ENCODE measurements at regions of chr17 and their contacts with region 1.

Region 1: GRCh38 chr17:51120739-51121617 is at the start of gene SPAG9:
- DNase-seq: peak; percentile 97 to 99
- ATAC-seq: peak; percentile 79 to 85 (median 80)
- H3K4me3 ChIP-seq: peak within 1 kb of the TSS; percentile 99
- H3K27ac ChIP-seq: peak within 1 kb of the TSS; percentile 99
- H3K4me1 ChIP-seq: peaks cover 31% of the 10 kb centered on the region
- H3K27me3 ChIP-seq: no peaks in the 10 kb centered on the region
- CTCF ChIP-seq: no peak
- total RNA-seq, gene SPAG9: 82.1 to 133 (median 121) TPM

Region 2: GRCh38 chr17:51046514-51047384 is 74.2 kb before region 1 on chr17:
- intact Hi-C with region 1: no loop called
- DNase-seq: peak in 1 of 2 donors; percentile 38
- ATAC-seq: peak; percentile 32 to 79 (median 70)
- H3K4me3 ChIP-seq: peak overlapping the region; percentile 5
- H3K27ac ChIP-seq: no peak overlapping the region
- H3K4me1 ChIP-seq: peaks cover 7% of the 10 kb centered on the region
- H3K27me3 ChIP-seq: no peaks in the 10 kb centered on the region
- CTCF ChIP-seq: no peak

Region 3: DNA sequence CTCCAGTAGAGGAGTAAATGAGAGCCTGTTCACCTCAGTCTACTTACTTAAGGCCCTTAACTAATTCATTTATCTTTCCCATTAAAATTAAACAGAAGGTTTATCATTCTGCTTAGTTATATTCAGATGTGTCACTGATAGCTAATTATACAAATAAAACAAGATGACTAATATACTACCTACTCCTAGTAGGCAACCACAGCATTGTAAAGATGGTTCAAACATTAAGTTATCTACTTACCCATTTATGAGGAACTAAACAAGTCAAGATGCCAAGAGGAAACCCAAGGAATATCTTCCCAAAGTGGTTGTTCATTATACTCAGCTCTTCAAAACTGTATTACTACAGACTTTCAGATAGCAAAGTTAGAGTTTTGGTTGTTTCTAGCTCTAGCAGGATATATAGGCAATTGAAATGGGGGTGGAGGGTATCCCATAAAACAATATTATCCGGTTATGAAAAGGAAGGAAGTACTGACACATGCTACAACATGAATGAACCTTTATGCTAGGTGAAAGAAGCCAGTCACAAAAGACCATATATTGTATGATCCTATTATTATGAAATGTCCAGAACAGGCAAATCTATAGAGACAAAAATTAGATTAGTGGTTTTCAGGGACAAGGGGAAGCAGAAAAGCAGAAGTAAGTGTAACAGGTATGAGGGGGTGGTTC is 56.8 kb before region 1 on chr17:
- intact Hi-C with region 1: loop called in 1 of 2 experiments (anchors 10 kb)
- DNase-seq: no peak
- ATAC-seq: peak in 1 of 4 donors; percentile 37
- H3K4me3 ChIP-seq: no peak overlapping the region
- H3K27ac ChIP-seq: no peak overlapping the region
- H3K4me1 ChIP-seq: peaks cover under 1% of the 10 kb centered on the region
- H3K27me3 ChIP-seq: no peaks in the 10 kb centered on the region
- CTCF ChIP-seq: no peak

Region 4: DNA sequence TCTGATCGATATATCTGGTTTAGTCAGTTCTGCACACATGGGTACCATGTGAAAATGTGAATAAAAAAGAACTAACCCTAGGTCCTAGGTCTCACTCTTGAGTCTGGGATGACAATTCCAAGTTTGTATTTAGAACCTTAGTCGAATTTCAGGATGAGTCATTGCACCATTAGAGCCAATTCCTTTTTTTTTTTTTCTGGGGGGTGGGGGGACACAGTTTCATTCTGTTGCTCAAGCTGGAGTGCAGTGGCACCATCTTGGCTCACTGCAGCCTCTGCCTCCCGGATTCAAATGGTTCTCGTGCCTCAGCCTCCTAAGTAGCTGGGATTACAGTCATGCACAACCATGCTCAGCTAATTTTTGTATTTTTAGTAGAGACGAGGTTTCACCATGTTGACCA is 41.9 kb before region 1 on chr17:
- intact Hi-C with region 1: loop called (anchors 2 to 5 kb)
- DNase-seq: peak in 1 of 2 donors; percentile 58
- ATAC-seq: peak; percentile 62 to 85 (median 78)
- H3K4me3 ChIP-seq: peak overlapping the region; percentile 22
- H3K27ac ChIP-seq: peak overlapping the region; percentile 67
- H3K4me1 ChIP-seq: peaks cover 18% of the 10 kb centered on the region
- H3K27me3 ChIP-seq: no peaks in the 10 kb centered on the region
- CTCF ChIP-seq: no peak

Region 5: DNA sequence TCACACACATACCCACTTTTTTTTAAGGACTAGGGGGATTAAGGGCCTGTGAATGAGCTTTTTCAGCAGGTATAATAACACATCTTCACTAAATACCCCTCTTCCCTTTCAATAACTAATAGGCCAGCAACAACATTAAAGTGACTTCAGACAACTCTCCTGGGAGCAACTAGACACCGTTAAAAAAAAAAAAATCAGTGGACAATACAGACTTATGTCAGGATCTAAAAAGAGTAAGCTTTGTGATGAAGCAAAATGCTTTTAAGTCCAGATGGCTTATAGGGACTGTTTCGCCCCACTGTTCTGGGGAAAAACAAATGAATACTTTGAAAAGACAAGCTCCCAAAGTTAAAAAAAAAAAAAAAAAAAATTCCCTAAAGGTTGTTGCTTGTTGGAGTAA is 29.3 kb before region 1 on chr17:
- intact Hi-C with region 1: loop called in 1 of 2 experiments (anchors 2 kb)
- DNase-seq: no peak
- ATAC-seq: peak; percentile 64 to 87 (median 84)
- H3K4me3 ChIP-seq: no peak overlapping the region
- H3K27ac ChIP-seq: peak overlapping the region; percentile 68
- H3K4me1 ChIP-seq: peaks cover 35% of the 10 kb centered on the region
- H3K27me3 ChIP-seq: no peaks in the 10 kb centered on the region
- CTCF ChIP-seq: no peak

Region 6: DNA sequence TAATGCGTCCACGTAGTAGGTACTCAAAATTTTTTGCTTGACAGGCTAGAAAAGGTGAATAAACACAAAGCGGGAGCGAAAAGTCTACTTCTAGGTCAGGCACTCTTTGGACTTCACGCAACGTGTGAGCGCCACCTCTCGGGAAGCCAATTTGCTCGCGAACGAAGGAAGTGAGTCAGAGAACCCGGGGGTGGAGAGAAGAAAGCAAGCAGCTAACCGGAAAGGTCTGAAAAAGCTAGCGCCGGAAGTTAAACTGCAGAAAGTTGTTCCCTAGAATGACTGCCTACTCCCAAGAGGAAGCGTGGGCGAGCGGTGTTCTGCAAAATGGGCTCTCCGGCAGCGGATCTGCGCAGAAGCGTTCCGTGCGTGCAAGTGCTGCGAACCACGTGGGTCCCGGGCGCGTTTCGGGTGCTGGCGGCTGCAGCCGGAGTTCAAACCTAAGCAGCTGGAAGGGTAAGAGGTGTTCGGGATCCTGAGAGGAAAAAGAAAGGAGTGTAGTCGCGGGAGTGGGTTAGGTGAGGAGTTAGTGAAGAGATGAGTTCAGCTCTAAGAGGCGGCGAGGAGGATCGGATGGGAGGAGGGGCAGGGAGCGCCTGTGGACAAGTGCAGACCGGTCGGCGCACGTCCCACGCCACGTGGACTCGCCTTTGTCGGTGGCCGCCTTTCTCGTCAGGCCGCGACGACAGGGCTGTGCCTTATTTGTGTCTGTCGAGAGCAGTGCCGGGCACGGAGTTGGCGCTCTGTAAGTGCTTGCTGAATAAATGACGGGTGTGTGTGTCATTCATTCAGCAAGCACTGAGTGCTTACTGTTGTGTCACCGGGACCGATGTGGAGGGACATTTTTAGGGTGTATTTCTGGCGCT is 32.5 kb after region 1 on chr17 and contains the start of gene NME1:
- intact Hi-C with region 1: loop called (anchors 1 to 2 kb)
- DNase-seq: peak; percentile 92 to 97
- ATAC-seq: peak; percentile 93 to 95 (median 94)
- H3K4me3 ChIP-seq: peak within 1 kb of the TSS; percentile 88
- H3K27ac ChIP-seq: peak within 1 kb of the TSS; percentile 83
- H3K4me1 ChIP-seq: peaks cover 5% of the 10 kb centered on the region
- H3K27me3 ChIP-seq: no peaks in the 10 kb centered on the region
- CTCF ChIP-seq: peak; percentile 76
- total RNA-seq, gene NME1: 29.3 to 75.0 (median 50.9) TPM

Region 7: DNA sequence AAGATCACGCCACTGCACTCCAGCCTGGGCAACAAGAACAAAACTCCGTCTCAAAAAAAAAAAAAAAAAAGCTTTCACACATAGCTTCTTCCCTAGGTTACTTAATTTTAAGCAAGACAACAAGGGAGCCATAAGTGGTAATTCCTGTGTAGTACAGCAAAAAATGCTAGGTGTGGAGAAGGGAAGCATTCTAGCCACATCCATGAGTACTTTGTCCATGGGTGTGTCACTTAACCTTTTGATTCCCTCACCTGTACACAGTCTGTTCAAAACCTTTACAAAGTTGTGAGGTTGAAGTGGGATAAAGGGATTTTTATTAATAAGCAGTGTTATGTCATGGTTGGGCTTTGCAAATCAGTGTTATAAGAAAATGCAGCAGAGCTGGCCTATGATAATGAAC is 49.8 kb after region 1 on chr17:
- intact Hi-C with region 1: no loop called
- DNase-seq: no peak
- ATAC-seq: no peak
- H3K4me3 ChIP-seq: no peak overlapping the region
- H3K27ac ChIP-seq: no peak overlapping the region
- H3K4me1 ChIP-seq: peaks cover 10% of the 10 kb centered on the region
- H3K27me3 ChIP-seq: no peaks in the 10 kb centered on the region
- CTCF ChIP-seq: no peak

Region 8: GRCh38 chr17:51197765-51198164 is 76.8 kb after region 1 on chr17:
- intact Hi-C with region 1: no loop called
- DNase-seq: no peak
- ATAC-seq: no peak
- H3K4me3 ChIP-seq: no peak overlapping the region
- H3K27ac ChIP-seq: no peak overlapping the region
- H3K4me1 ChIP-seq: no peaks in the 10 kb centered on the region
- H3K27me3 ChIP-seq: no peaks in the 10 kb centered on the region
- CTCF ChIP-seq: no peak

Region 9: GRCh38 chr17:51270636-51271035 is 149.7 kb after region 1 on chr17:
- intact Hi-C with region 1: no loop called
- DNase-seq: no peak
- ATAC-seq: no peak
- H3K4me3 ChIP-seq: no peak overlapping the region
- H3K27ac ChIP-seq: no peak overlapping the region
- H3K4me1 ChIP-seq: no peaks in the 10 kb centered on the region
- H3K27me3 ChIP-seq: no peaks in the 10 kb centered on the region
- CTCF ChIP-seq: no peak